Activated T-helper 1 cell treated with anti-CD3 and anti-CD28 coated beads, Interleukin-12 subunit alpha, Interleukin-12 subunit beta, Interleukin-2, Interleukin-4 antibody, amounts not matched to agents 30 ng/mL and 10 ng/mL and 1 ng/mL, durations not matched to agents 14 hours and 24 hours and 36 hours (primary cell): ENCODE measurements at regions of chr3 and their contacts with region 1.

Region 1: GRCh38 chr3:12242753-12243152 is 46.1 kb upstream of the PPARG start:
- DNase-seq: no peak
- H3K4me3 Mint-ChIP-seq: no peak overlapping the region
- H3K27ac Mint-ChIP-seq: no peak overlapping the region
- H3K4me1 Mint-ChIP-seq: peaks cover 15% of the 10 kb centered on the region
- H3K27me3 Mint-ChIP-seq: peaks cover under 1% of the 10 kb centered on the region

Region 2: DNA sequence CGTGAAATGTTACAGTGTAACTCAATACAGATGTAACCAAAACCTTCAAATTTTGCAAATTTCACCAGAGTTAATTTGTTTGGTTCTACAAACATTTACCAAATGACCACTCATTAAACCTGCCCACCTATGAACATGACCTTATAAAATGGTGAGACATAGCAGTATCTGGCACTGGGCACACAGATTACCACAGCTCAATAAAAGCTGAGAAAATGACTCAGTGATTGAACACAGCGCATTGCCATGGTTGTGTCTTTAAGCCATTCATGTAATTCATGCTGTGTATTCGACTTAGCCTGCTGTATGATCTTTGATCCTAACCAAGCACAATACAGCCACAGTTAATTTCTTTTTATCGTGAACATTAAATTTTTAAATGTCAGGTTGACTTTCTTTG is 57.4 kb after region 1 on chr3:
- intact Hi-C with region 1: loop called (anchors 2 kb)
- DNase-seq: no peak
- H3K4me3 Mint-ChIP-seq: no peak overlapping the region
- H3K27ac Mint-ChIP-seq: no peak overlapping the region
- H3K4me1 Mint-ChIP-seq: no peaks in the 10 kb centered on the region
- H3K27me3 Mint-ChIP-seq: peaks cover 15% of the 10 kb centered on the region